ENCODE measurements at regions of chr17 and their contacts with region 1.

Region 1: GRCh38 chr17:63946440-63947367 is 14.6 kb upstream of the CD79B start:
- DNase-seq: peak; percentile 79
- ATAC-seq: peak; percentile 85
- H3K4me3 Mint-ChIP-seq: peak overlapping the region; percentile 39
- H3K27ac Mint-ChIP-seq: peak overlapping the region; percentile 62
- H3K4me1 Mint-ChIP-seq: peaks cover 19% of the 10 kb centered on the region
- H3K27me3 Mint-ChIP-seq: peaks cover 21% of the 10 kb centered on the region

Region 2: GRCh38 chr17:63809970-63810369 is 136.7 kb before region 1 on chr17:
- CTCF ChIA-PET with region 1: no interaction called
- DNase-seq: no peak
- ATAC-seq: no peak
- H3K4me3 Mint-ChIP-seq: no peak overlapping the region
- H3K27ac Mint-ChIP-seq: no peak overlapping the region
- H3K4me1 Mint-ChIP-seq: peaks cover 5% of the 10 kb centered on the region
- H3K27me3 Mint-ChIP-seq: no peaks in the 10 kb centered on the region

Region 3: GRCh38 chr17:63904316-63904715 is 42.4 kb before region 1 on chr17:
- CTCF ChIA-PET with region 1: interaction called, 22 read pairs
- DNase-seq: no peak
- ATAC-seq: no peak
- H3K4me3 Mint-ChIP-seq: no peak overlapping the region
- H3K27ac Mint-ChIP-seq: no peak overlapping the region
- H3K4me1 Mint-ChIP-seq: peaks cover 5% of the 10 kb centered on the region
- H3K27me3 Mint-ChIP-seq: peaks cover 43% of the 10 kb centered on the region

Region 4: GRCh38 chr17:63919311-63919723 is 27.4 kb before region 1 on chr17:
- CTCF ChIA-PET with region 1: interaction called, 77 read pairs
- DNase-seq: peak; percentile 81
- ATAC-seq: peak; percentile 96
- H3K4me3 Mint-ChIP-seq: no peak overlapping the region
- H3K27ac Mint-ChIP-seq: no peak overlapping the region
- H3K4me1 Mint-ChIP-seq: peaks cover 5% of the 10 kb centered on the region
- H3K27me3 Mint-ChIP-seq: peaks cover 11% of the 10 kb centered on the region

Region 5: DNA sequence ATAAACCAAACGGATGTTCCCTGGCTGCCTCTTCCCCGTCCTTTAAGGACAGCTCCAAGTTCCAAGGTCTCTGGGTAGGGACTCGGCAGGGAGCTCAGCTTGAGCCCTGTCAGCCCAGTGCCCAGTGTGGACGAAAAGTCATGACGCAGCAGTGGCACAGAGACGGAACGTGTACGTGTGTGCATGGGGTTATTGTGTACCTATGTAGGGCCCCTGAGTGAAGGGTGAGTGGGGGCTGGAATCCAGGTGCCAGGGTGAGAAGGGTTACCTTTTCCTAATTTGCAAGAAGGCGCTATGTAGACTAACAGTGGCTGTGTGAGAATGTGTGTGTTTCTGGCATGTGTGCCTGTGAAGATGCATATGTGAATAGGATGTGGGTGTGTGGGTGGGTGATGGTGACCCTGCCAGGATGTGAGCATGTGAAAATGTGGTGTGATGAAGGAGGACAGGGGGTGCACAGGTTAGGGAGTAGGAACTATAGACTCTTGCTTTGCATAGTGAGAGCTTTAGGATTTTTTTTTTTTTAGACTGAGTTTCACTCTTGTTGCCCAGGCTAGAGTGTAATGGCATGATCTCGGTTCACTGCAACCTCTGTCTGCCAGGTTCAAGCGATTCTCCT is 20.1 kb after region 1 on chr17:
- CTCF ChIA-PET with region 1: interaction called, 25 read pairs
- DNase-seq: peak; percentile 78
- ATAC-seq: peak; percentile 79
- H3K4me3 Mint-ChIP-seq: no peak overlapping the region
- H3K27ac Mint-ChIP-seq: no peak overlapping the region
- H3K4me1 Mint-ChIP-seq: peaks cover 12% of the 10 kb centered on the region
- H3K27me3 Mint-ChIP-seq: peaks cover 10% of the 10 kb centered on the region

Region 6: GRCh38 chr17:63998050-63998720 is 51.5 kb after region 1 on chr17 and contains the start of gene PRR29:
- CTCF ChIA-PET with region 1: interaction called, 15 read pairs
- DNase-seq: peak; percentile 86
- ATAC-seq: peak; percentile 84
- H3K4me3 Mint-ChIP-seq: peak within 1 kb of the TSS; percentile 87
- H3K27ac Mint-ChIP-seq: peak within 1 kb of the TSS; percentile 33
- H3K4me1 Mint-ChIP-seq: peaks cover 32% of the 10 kb centered on the region
- H3K27me3 Mint-ChIP-seq: peaks cover 4% of the 10 kb centered on the region
- total RNA-seq, gene PRR29: 1.5 to 3.3 TPM

Region 7: GRCh38 chr17:64200080-64201032 is 253.7 kb after region 1 on chr17:
- CTCF ChIA-PET with region 1: no interaction called
- DNase-seq: no peak
- ATAC-seq: peak; percentile 57
- H3K4me3 Mint-ChIP-seq: no peak overlapping the region
- H3K27ac Mint-ChIP-seq: no peak overlapping the region
- H3K4me1 Mint-ChIP-seq: peaks cover 25% of the 10 kb centered on the region
- H3K27me3 Mint-ChIP-seq: no peaks in the 10 kb centered on the region

Measured in activated CD8-positive, alpha-beta memory T cell treated with anti-CD3 and anti-CD28 coated beads, Interleukin-2, amount 10 ng/mL, durations not matched to agents 7 days and 5 days (primary cell).